Natural killer cell (primary cell): ENCODE measurements at regions of chr1 and their contacts with region 1.

Region 1: GRCh38 chr1:34852677-34853217 is 6.8 kb downstream of the SMIM12 start:
- DNase-seq: peak; percentile 83 to 96
- ATAC-seq: peak; percentile 100
- H3K4me3 ChIP-seq: no peak overlapping the region
- H3K4me3 Mint-ChIP-seq: no peak overlapping the region
- H3K27ac ChIP-seq: no peak overlapping the region
- H3K27ac Mint-ChIP-seq: peak overlapping the region; percentile 43 to 57
- H3K4me1 ChIP-seq: peaks cover 2% of the 10 kb centered on the region
- H3K4me1 Mint-ChIP-seq: peaks cover 40 to 43% of the 10 kb centered on the region in 2 donors
- H3K27me3 ChIP-seq: no peaks in the 10 kb centered on the region
- H3K27me3 Mint-ChIP-seq: no peaks in the 10 kb centered on the region
- CTCF ChIP-seq: peak; percentile 93

Region 2: DNA sequence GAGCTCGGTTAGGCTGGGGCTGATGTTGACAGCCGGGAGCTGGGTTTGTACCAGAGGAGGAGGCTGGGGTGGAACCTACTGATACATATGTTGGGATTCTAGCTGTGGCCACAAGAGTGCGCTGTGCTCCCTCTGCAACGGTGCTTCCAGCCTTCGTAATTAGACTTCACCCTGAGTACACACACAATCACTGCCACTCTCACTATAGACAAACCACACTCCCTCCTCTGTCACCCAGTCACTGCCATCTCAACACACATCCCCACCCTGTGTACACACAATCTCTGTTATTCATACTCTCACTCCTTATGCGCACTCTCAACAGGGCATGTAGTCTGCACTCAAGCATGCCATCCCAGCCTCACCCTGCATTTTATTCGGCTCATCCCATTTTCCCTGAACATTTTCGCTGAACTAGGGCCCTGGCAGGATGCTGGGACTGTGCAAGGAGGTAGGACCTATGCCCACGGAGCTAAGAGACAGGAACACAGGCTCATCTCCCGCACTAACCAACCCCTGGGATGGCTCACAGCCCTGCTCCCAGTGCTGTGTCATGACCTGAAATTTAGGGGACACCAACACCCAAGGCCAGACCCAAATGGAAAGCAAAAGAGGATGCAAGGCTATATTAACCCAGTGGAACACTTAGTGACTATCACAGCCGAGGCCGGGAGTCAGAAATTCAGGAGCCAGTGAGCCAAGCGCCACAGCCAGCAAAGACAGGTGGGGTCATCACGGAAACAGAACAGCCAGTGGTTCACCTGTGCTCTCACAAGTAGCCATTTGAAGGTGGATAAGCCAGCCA is 66.0 kb before region 1 on chr1:
- intact Hi-C with region 1: loop called (anchors 1 kb)
- DNase-seq: peak; percentile 45 to 81
- ATAC-seq: peak; percentile 79 to 94 (median 89)
- H3K4me3 ChIP-seq: no peak overlapping the region
- H3K4me3 Mint-ChIP-seq: no peak overlapping the region
- H3K27ac ChIP-seq: no peak overlapping the region
- H3K27ac Mint-ChIP-seq: no peak overlapping the region
- H3K4me1 ChIP-seq: peaks cover 9% of the 10 kb centered on the region
- H3K4me1 Mint-ChIP-seq: peaks cover 0 to 7% of the 10 kb centered on the region in 2 donors
- H3K27me3 ChIP-seq: peaks cover 10% of the 10 kb centered on the region
- H3K27me3 Mint-ChIP-seq: peaks cover 29 to 33% of the 10 kb centered on the region in 2 donors
- CTCF ChIP-seq: peak; percentile 73

Region 3: GRCh38 chr1:34865981-34866761 is 13.4 kb after region 1 on chr1:
- intact Hi-C with region 1: loop called (anchors 2 kb)
- DNase-seq: peak; percentile 89 to 96
- ATAC-seq: peak; percentile 83 to 86 (median 86)
- H3K4me3 ChIP-seq: peak overlapping the region; percentile 76
- H3K4me3 Mint-ChIP-seq: peak overlapping the region; percentile 85
- H3K27ac ChIP-seq: peak overlapping the region; percentile 86
- H3K27ac Mint-ChIP-seq: peak overlapping the region; percentile 59 to 73
- H3K4me1 ChIP-seq: peaks cover 44% of the 10 kb centered on the region
- H3K4me1 Mint-ChIP-seq: peaks cover 34 to 41% of the 10 kb centered on the region in 2 donors
- H3K27me3 ChIP-seq: no peaks in the 10 kb centered on the region
- H3K27me3 Mint-ChIP-seq: peaks cover 2 to 3% of the 10 kb centered on the region in 2 donors
- CTCF ChIP-seq: peak; percentile 99

Region 4: DNA sequence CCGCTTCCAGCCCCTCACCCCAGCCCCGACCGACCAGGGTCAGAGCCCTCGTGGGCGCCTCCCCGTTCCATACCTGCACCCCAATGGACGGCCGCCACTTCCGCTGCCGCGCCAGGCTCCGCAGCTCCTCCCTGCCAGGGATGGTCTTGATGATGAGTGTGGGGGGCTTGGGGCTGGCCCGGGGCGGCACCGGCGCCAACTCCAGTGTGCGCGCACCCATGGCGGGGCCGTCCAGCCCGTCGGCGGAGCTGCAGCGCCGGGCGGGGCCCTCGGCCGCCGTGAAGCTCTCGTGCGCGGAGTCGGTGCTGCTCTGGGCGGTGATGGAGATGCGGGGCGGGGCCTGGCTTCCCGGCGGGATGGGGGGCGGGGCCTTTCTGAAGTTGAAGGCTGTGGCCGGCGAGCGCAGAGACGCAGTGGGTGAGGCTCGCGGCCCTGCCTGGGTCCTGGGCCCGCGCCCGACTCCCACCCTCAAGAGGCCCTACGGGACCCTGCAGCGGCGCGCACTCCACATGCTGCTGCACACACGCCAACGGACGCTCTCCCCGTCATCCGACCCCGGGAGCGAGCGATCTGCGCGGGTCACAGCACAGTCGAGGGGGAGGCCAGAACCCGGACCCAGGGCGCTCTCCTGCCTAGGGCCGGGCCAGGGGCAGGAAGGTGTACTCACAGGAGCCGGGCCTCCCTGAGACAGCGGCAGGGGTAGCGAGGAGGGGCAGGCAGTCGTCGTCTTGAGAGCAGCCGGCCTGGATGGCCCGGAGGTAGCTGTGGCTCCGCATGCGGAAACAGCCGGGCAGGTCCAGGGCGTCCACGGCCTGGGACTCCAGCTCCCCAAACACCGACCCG is 32.9 kb after region 1 on chr1:
- intact Hi-C with region 1: loop called (anchors 1 kb)
- DNase-seq: peak in 1 of 2 donors; percentile 48
- ATAC-seq: peak; percentile 46 to 81 (median 64)
- H3K4me3 ChIP-seq: peak overlapping the region; percentile 37
- H3K4me3 Mint-ChIP-seq: peak overlapping the region; percentile 78
- H3K27ac ChIP-seq: no peak overlapping the region
- H3K27ac Mint-ChIP-seq: no peak overlapping the region
- H3K4me1 ChIP-seq: peaks cover 12% of the 10 kb centered on the region
- H3K4me1 Mint-ChIP-seq: peaks cover 0 to 15% of the 10 kb centered on the region in 2 donors
- H3K27me3 ChIP-seq: peaks cover 17% of the 10 kb centered on the region
- H3K27me3 Mint-ChIP-seq: peaks cover 38 to 57% of the 10 kb centered on the region in 2 donors
- CTCF ChIP-seq: no peak